ENCODE measurements at regions of chr3 and their contacts with region 1.

Region 1: GRCh38 chr3:187738331-187739093 is 6.8 kb downstream of the BCL6 start:
- DNase-seq: peak; percentile 81
- CTCF ChIP-seq: peak; percentile 71

Region 2: DNA sequence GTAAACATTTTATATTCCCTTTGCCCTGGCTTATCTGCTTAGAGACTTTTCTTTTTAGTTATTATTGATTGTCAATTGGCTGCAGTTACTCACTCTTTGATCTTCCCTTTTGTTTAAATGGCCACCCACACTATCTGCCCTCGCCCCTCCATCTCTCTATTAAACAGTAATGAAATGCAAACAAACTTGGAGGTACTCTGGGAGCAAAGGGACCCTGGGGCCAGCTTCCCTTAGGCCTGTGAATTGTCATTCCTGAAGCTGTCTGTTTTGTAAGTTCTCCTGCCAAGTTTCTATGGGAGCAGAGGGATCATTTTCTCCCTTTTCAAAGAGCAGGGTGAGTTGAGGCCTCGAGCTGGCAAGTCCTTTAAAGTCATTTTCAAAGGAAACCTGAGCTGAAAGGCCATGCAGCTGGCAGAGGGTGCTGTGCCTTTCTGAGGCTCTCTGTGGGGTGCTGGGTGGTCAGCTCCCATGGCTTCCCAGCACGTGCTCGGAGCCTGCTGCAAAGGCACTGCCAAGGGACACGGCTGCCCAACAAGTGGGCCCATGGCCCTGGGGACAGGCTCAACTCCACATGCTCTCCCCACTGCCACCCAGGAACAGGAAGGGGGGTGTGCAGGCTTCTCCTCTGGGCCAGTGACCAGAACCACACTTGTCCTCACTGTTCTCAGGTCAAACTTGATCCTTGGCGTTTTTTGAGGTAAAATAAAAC is 18.7 kb before region 1 on chr3:
- CTCF ChIA-PET with region 1: interaction called, 32 read pairs
- POLR2A ChIA-PET with region 1: no interaction called
- DNase-seq: no peak
- CTCF ChIP-seq: no peak

Region 3: GRCh38 chr3:187802928-187803259 is 64.4 kb after region 1 on chr3:
- CTCF ChIA-PET with region 1: interaction called, 12 read pairs
- POLR2A ChIA-PET with region 1: no interaction called
- DNase-seq: peak; percentile 46
- CTCF ChIP-seq: no peak

Region 4: GRCh38 chr3:188664795-188665194 is 926.3 kb after region 1 on chr3:
- CTCF ChIA-PET with region 1: interaction called, 10 read pairs
- POLR2A ChIA-PET with region 1: no interaction called
- DNase-seq: peak; percentile 15
- CTCF ChIP-seq: no peak

Region 5: DNA sequence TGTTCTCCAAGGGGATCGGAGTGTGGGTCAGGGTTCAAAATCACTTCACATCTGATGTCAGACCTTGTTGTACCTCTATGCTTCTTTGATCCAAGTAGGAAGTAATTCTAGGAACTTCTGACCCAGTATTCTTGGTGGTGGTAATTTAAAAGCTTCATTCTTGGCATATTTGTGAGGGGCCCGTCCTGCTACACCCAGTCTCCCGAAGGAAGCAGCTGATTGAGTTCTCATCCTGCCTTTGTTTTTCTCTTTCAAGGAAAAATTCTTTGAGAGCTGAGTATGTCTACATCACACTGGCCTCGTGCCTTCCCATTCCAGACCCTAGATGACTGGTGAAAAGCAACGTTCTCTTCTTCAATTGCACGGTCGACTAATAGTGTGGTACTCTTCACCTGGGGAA is 1198.9 kb after region 1 on chr3:
- CTCF ChIA-PET with region 1: interaction called, 26 read pairs
- POLR2A ChIA-PET with region 1: no interaction called
- DNase-seq: no peak
- CTCF ChIP-seq: no peak

Region 6: DNA sequence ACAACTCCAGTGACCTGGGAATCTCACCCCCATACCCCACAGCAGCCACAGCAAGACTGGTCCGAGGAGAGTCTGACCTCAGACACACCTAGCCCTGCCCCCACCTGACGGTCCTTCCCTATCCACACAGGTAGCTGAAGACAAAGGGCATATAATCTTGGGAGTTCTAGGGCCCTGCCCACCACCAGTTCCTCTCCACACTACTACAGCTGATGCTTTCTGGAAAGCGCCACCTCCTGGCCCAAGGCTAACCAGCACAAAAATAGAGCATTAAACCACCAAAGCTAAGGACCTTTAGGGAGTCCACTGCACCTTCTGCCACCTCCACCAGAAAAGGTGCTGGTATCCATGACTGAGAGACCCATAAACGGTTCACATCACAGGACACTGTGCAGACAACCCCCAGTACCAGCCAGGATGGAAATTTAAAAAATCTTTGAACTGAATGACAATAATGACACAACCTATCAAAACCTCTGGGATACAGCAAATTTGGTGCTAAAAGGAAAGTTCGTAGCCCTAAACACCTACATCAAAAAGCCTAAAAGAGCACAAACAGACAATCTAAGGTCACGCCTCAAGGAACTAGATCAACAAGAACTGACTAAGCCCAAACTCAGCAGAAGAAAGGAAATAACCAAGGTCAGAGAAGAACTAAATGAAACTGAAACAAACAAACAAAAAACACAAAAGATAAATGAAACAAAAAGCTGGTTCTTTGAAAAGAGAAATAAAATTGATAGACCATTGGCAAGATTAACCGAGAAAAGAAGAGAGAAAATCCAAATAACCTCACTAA is 1311.1 kb after region 1 on chr3:
- CTCF ChIA-PET with region 1: interaction called, 16 read pairs
- POLR2A ChIA-PET with region 1: no interaction called
- DNase-seq: no peak
- CTCF ChIP-seq: peak; percentile 9